Posterior cingulate gyrus (tissue), 11 donors: ENCODE measurements at regions of chr19 and their contacts with region 1.

Region 1: GRCh38 chr19:3984908-3985642 is at the start of gene EEF2:
- DNase-seq: peak; percentile 79 to 98 (median 85)

Region 2: DNA sequence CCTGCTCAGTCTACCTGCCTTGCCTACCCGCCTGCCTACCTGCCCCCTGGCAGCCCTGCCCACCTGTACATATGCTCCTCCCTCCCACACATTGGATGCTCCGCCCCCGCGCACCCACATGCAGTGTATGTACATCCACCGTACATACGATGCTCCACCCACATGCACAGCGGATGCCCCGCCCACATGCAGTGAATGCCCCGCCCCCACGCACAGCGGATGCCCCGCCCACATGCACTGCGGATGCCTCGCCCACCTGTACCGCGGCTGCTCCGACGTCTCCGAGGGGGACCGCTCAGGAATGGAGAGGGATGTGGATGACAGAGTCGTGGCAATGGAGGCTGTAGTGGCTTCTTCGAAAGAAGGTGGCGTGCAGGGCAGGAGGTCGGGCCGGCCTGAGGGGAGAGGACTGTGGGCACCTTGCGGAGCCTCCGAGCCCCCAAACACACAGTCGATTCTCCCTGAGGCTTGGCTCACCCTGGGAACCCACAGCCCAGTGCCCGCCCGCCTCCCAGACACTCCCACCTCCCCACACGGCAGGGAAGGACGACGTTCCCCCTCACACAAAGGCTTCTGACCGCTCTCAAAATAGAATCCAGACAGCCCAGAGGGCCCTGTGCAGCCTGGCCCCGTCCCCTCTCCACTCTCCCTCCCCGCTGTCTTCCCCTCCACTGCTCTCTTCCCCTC is 341.9 kb before region 1 on chr19:
- intact Hi-C with region 1: no loop called
- DNase-seq: peak in 1 of 10 donors; percentile 41

Region 3: GRCh38 chr19:3914199-3914598 is 70.9 kb before region 1 on chr19:
- intact Hi-C with region 1: no loop called
- DNase-seq: no peak

Region 4: GRCh38 chr19:3970808-3971598 is 14.1 kb before region 1 on chr19 and contains the start of gene DAPK3:
- intact Hi-C with region 1: loop called (anchors 2 kb)
- DNase-seq: peak; percentile 97 to 100 (median 98)

Region 5: GRCh38 chr19:4007021-4007835 is 22.2 kb after region 1 on chr19 and contains the start of gene PIAS4:
- intact Hi-C with region 1: loop called (anchors 2 kb)
- DNase-seq: peak; percentile 86 to 99 (median 93)

Region 6: GRCh38 chr19:4065430-4066175 is 80.5 kb after region 1 on chr19:
- intact Hi-C with region 1: loop called (anchors 5 kb)
- DNase-seq: peak; percentile 91 to 100 (median 98)

Region 7: DNA sequence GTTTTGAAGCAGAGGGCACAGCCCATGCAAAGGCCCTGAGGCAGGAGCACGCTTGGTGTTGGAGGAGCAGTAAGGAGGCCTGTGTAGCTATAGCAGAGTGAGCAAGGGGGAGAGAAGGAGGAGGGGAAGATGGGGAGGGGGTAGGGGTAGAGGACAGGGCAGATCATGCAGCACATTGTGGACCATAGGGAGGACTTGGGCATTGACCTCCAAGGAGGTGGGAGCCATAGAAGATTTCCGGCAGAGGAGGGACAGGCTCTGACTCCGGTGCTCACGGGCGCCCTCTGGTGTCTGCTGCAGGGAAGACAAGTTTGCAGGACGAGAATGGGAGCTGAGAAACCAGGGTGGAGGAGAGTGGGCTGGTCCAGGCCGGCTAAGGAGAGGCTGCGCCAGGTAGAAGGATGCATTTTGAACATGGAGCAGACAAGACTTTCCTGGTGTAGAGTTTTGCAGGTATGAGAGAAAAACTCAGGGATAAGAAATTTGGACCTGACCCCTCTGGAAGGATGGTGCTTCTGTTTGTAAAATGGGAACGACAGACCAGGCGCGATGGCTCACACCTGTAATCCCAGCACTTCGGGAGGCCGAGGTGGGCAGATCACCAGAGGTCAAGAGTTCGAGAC is 154.7 kb after region 1 on chr19:
- intact Hi-C with region 1: loop called (anchors 1 kb)
- DNase-seq: peak; percentile 46 to 96 (median 80)

Region 8: DNA sequence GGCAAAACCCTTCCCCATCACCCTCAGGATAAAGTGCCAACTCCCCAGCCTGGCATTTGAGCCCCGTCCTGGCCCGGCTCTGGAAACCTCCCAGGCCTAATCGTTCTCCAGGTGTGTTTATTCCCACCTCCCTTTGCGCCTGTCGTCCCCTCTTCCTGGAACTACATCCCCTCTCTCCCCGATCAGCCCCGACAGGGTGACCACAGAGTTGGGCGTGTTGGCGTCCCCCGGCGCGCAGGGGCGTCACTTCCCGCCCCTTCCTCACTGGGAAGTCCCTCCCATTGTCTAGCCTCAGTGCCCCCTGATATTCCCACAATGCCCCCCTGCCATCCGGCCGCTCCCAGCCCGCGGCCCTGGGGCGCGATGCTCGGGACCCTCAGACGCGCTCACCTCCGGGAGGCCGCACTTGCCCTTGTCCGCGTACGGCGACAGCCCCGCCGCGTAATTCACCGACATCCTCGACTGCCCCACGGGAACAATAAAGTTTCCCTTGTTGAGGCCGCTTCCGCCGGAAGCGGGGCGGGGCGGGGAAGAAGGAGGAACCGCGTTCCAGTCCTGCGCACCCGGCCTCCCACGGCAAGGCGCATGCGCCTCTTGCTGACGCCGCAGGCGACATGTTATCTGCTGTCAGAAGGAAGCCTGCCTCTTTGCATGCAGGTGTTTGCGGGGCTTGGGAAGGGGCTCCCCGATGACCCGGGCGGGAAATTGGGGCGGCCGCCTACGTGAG is 197.2 kb after region 1 on chr19 and contains the starts of genes ANKRD24 and SIRT6:
- intact Hi-C with region 1: loop called (anchors 2 kb)
- DNase-seq: peak; percentile 94 to 100 (median 96)

Region 9: DNA sequence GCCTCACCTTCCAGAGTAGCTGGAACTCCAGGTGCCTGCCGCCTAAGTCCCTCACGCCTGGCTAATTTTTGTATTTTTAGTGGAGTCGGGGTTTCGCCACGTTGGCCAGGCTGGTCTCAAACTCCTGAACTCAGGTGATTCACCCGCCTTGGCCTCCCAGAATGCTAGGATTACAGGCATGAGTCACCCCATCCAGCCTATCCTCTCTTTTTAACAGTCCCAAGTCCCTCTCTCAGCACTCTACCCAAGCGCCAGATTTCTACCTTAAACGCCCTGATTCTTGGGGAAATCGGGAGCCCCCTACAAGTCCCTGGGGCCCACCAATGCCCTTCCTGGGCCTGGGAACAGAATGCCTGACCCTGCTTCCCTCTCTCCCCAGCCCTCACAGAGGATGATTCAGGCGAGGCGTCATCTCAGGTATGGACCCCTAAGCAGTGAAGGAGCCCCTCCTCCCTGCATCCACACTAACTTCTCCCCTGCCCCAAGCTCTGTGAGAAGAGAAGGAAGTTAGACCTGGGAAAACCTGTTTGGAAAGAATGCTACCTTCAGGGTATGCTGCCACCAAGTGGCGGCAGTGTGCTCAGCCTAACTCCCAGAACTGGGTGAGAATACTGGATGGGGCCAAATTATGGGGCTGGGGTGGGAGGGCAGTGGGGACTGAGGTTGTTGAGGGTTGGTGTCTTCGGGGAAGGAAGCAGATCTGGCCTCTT is 223.5 kb after region 1 on chr19:
- intact Hi-C with region 1: loop called (anchors 2 kb)
- DNase-seq: no peak